B cell (primary cell): ENCODE measurements at regions of chr11 and their contacts with region 1.

Region 1: DNA sequence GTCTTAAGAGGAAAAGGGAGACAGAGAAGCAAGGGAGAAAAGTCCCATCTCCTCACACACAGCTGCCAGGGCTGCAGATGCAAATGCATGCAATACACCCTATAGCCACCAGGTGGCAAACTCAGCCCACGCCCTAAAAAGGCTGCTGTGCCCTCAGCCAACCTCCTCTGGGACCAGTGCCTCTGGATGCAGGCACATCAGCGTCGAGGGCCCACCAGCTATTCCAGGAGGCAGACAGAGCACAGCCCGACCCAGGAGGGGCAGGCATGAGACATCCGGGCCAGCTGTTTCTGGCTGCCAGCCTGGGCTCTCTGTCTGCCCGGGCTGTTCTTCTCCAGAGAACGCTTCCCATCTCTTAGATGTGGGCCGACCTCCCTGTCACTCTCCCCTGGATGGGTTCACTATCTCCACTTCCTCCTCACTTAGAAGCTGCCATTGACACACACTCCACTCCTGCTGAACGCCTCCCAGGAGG is 39.7 kb downstream of the TPBGL start:
- DNase-seq: peak; percentile 81
- ATAC-seq: peak; percentile 68
- H3K4me3 ChIP-seq: no peak overlapping the region
- H3K4me3 Mint-ChIP-seq: no peak overlapping the region
- H3K27ac ChIP-seq: no peak overlapping the region
- H3K27ac Mint-ChIP-seq: no peak overlapping the region
- H3K4me1 ChIP-seq: peaks cover 14 to 16% of the 10 kb centered on the region in 2 donors
- H3K4me1 Mint-ChIP-seq: peaks cover 16% of the 10 kb centered on the region
- H3K27me3 ChIP-seq: no peaks in the 10 kb centered on the region
- H3K27me3 Mint-ChIP-seq: peaks cover 6% of the 10 kb centered on the region
- CTCF ChIP-seq: peak; percentile 100

Region 2: GRCh38 chr11:75142714-75143419 is 137.4 kb before region 1 on chr11:
- CTCF ChIA-PET with region 1: interaction called, 199 read pairs
- POLR2A ChIA-PET with region 1: no interaction called
- intact Hi-C with region 1: no loop called
- DNase-seq: peak; percentile 38
- ATAC-seq: peak; percentile 58
- H3K4me3 ChIP-seq: no peak overlapping the region
- H3K4me3 Mint-ChIP-seq: peak overlapping the region; percentile 8
- H3K27ac ChIP-seq: no peak overlapping the region
- H3K27ac Mint-ChIP-seq: no peak overlapping the region
- H3K4me1 ChIP-seq: peaks cover 8 to 19% of the 10 kb centered on the region in 2 donors
- H3K4me1 Mint-ChIP-seq: peaks cover 20% of the 10 kb centered on the region
- H3K27me3 ChIP-seq: peaks cover 0 to 3% (median 0%) of the 10 kb centered on the region in 4 experiments
- H3K27me3 Mint-ChIP-seq: peaks cover 19% of the 10 kb centered on the region
- CTCF ChIP-seq: no peak

Region 3: DNA sequence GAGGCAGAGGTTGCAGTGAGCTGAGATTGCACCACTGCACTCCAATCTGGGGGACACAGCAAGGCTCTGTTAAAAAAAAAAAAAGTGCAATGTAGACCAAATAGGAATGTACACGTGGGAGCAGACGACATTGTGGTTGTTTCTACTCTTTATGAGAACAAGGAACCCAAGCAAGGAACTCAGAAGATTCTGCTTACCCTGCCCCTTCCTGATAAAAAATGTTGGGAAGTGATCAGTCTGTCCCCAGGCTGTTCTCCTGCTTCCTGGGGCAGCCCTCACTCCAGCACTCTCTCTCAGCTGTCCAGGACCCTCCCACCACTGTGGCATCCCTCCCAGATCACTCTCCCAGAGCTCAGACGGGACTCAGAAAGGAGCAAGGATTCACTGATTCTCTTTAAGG is 97.6 kb before region 1 on chr11:
- CTCF ChIA-PET with region 1: no interaction called
- POLR2A ChIA-PET with region 1: no interaction called
- intact Hi-C with region 1: no loop called
- DNase-seq: no peak
- ATAC-seq: no peak
- H3K4me3 ChIP-seq: no peak overlapping the region
- H3K4me3 Mint-ChIP-seq: no peak overlapping the region
- H3K27ac ChIP-seq: no peak overlapping the region
- H3K27ac Mint-ChIP-seq: no peak overlapping the region
- H3K4me1 ChIP-seq: no peaks in the 10 kb centered on the region
- H3K4me1 Mint-ChIP-seq: no peaks in the 10 kb centered on the region
- H3K27me3 ChIP-seq: peaks cover 0 to 8% (median 3%) of the 10 kb centered on the region in 4 experiments
- H3K27me3 Mint-ChIP-seq: peaks cover 17% of the 10 kb centered on the region
- CTCF ChIP-seq: no peak

Region 4: GRCh38 chr11:75219866-75220265 is 60.4 kb before region 1 on chr11:
- CTCF ChIA-PET with region 1: no interaction called
- POLR2A ChIA-PET with region 1: no interaction called
- intact Hi-C with region 1: no loop called
- DNase-seq: no peak
- ATAC-seq: no peak
- H3K4me3 ChIP-seq: no peak overlapping the region
- H3K4me3 Mint-ChIP-seq: no peak overlapping the region
- H3K27ac ChIP-seq: no peak overlapping the region
- H3K27ac Mint-ChIP-seq: peak overlapping the region; percentile 42
- H3K4me1 ChIP-seq: no peaks in the 10 kb centered on the region
- H3K4me1 Mint-ChIP-seq: no peaks in the 10 kb centered on the region
- H3K27me3 ChIP-seq: peaks cover 0 to 2% (median 0%) of the 10 kb centered on the region in 4 experiments
- H3K27me3 Mint-ChIP-seq: peaks cover 31% of the 10 kb centered on the region
- CTCF ChIP-seq: no peak

Region 5: DNA sequence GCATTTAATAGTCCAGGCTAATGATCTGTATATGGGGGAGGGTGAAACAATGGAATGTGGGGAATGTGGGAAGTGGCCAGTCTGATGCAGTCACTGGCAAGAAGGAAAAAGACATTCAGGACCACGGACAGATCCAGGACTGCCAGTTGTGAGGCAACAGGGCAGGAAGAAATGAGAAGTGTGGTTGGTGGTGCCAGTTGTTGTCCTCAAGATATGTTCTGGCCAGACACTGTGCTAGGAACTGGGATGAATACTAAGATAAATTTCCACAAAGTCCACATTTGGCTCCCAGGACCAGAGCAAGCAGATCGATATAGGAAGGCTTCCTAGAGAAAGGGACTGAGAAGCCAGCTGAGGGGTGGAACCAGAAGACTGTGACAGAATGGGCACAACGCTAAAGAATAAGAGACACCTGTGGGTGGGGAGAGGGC is 46.5 kb before region 1 on chr11:
- CTCF ChIA-PET with region 1: no interaction called
- POLR2A ChIA-PET with region 1: no interaction called
- intact Hi-C with region 1: no loop called
- DNase-seq: no peak
- ATAC-seq: no peak
- H3K4me3 ChIP-seq: no peak overlapping the region
- H3K4me3 Mint-ChIP-seq: no peak overlapping the region
- H3K27ac ChIP-seq: no peak overlapping the region
- H3K27ac Mint-ChIP-seq: no peak overlapping the region
- H3K4me1 ChIP-seq: no peaks in the 10 kb centered on the region
- H3K4me1 Mint-ChIP-seq: no peaks in the 10 kb centered on the region
- H3K27me3 ChIP-seq: peaks cover 0 to 42% (median 7%) of the 10 kb centered on the region in 4 experiments
- H3K27me3 Mint-ChIP-seq: peaks cover 64% of the 10 kb centered on the region
- CTCF ChIP-seq: no peak

Region 6: DNA sequence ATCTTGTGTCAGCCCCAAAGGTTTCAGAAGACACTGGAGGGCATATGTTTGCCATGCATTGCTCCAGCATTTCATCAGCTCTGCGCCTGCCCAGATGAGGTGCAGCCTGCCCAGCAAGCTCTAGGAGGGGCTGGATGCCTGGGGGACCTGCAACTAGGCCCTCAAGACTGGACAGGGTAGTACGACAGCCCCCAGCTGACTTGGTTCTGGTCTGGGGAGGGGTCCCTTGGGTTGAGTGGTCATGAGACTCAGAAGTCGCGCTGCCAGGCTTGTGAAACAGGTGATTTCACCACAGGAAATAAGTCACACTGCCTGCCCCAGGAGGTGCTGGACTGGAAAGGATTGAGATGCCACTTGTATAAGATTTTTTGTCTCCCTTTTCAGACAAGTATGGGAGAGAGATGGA is 16.3 kb before region 1 on chr11:
- CTCF ChIA-PET with region 1: interaction called, 12 read pairs
- POLR2A ChIA-PET with region 1: no interaction called
- intact Hi-C with region 1: no loop called
- DNase-seq: peak; percentile 63
- ATAC-seq: peak; percentile 35
- H3K4me3 ChIP-seq: no peak overlapping the region
- H3K4me3 Mint-ChIP-seq: peak overlapping the region; percentile 11
- H3K27ac ChIP-seq: no peak overlapping the region
- H3K27ac Mint-ChIP-seq: peak overlapping the region; percentile 12
- H3K4me1 ChIP-seq: peaks cover 33 to 58% of the 10 kb centered on the region in 2 donors
- H3K4me1 Mint-ChIP-seq: peaks cover 40% of the 10 kb centered on the region
- H3K27me3 ChIP-seq: no peaks in the 10 kb centered on the region
- H3K27me3 Mint-ChIP-seq: peaks cover 3% of the 10 kb centered on the region
- CTCF ChIP-seq: no peak

Region 7: GRCh38 chr11:75365711-75366181 is 85.5 kb after region 1 on chr11:
- CTCF ChIA-PET with region 1: interaction called, 10 read pairs
- POLR2A ChIA-PET with region 1: no interaction called
- intact Hi-C with region 1: no loop called
- DNase-seq: no peak
- ATAC-seq: no peak
- H3K4me3 ChIP-seq: no peak overlapping the region
- H3K4me3 Mint-ChIP-seq: no peak overlapping the region
- H3K27ac ChIP-seq: no peak overlapping the region
- H3K27ac Mint-ChIP-seq: peak overlapping the region; percentile 21
- H3K4me1 ChIP-seq: peaks cover 12 to 13% of the 10 kb centered on the region in 2 donors
- H3K4me1 Mint-ChIP-seq: peaks cover 16% of the 10 kb centered on the region
- H3K27me3 ChIP-seq: peaks cover 0 to 3% (median 0%) of the 10 kb centered on the region in 4 experiments
- H3K27me3 Mint-ChIP-seq: peaks cover 9% of the 10 kb centered on the region
- CTCF ChIP-seq: no peak

Region 8: DNA sequence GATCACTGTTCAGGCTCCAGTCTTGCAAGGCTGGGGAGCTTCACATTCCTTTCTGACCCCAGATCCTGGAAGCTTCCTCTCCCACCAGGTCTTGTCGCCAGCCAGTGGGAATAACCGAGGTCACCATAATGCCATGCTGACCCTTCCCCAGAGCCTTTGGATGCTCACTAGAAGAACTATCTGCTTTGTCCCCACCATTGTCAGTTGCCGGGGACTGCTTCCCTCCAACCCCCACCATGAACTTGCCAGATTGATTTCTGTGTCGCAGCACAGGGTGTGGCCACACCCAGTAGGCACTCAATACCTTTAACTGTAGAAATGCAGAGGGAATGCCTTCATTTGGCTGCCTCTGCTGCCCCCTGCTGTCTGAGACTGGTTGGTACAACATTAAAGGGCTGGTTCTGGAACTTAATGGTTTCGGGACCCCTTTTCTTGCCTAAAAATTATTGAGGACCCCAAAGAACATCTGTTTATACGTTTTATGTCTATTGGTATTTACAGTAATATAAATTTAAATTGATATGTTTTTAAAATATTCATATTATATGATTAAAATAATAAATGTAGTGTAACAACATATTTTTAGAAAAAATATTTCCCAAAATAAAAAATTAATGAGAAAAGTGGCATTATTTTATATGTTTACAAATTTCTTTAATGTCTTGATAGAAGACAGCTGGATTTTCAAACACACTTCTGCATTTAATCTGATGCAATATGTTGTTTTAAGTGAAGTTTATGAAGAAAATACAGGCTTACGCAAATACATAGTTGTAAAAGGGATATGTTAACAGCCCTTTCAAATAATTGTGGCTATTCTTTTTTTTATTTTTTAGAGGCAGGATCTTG is 252.2 kb after region 1 on chr11:
- CTCF ChIA-PET with region 1: interaction called, 13 read pairs
- POLR2A ChIA-PET with region 1: no interaction called
- intact Hi-C with region 1: no loop called
- DNase-seq: peak; percentile 84
- ATAC-seq: peak; percentile 72
- H3K4me3 ChIP-seq: no peak overlapping the region
- H3K4me3 Mint-ChIP-seq: no peak overlapping the region
- H3K27ac ChIP-seq: no peak overlapping the region
- H3K27ac Mint-ChIP-seq: peak overlapping the region; percentile 0
- H3K4me1 ChIP-seq: peaks cover 12 to 24% of the 10 kb centered on the region in 2 donors
- H3K4me1 Mint-ChIP-seq: peaks cover 36% of the 10 kb centered on the region
- H3K27me3 ChIP-seq: peaks cover 0 to 5% (median 3%) of the 10 kb centered on the region in 4 experiments
- H3K27me3 Mint-ChIP-seq: peaks cover 15% of the 10 kb centered on the region
- CTCF ChIP-seq: peak; percentile 92